Ovary (tissue), 10 donors: ENCODE measurements at regions of chr16 and their contacts with region 1.

Region 1: DNA sequence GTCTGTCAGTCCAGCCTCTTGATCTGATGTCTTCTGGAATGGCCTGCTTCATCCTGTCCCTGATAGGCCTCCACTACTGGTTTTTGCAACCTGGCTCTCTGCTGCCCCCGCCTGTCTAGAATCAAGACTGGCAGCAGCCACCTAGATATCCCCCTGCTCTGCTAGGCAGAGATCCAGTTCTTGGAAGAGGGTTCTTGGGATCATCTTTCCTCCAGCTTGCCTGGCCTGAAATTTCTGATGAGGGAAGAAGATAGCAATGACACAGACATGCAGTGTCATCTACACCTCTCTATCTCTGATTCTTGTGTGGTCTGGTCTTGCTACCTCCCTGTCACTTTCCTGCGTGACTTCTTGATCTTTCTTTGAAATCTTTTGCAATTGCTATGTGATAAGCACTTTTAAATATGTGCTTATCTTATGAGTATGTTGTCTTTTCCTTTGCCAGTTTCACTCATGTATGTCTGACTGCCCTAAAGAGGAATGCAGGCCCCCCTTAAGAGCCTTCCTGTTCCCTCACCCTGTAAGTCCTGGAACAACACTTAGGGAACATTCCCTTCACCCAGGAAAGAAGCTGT is 20.3 kb upstream of the NFATC3 start:
- DNase-seq: peak; percentile 61 to 74 (median 62)
- H3K4me3 ChIP-seq: no peak overlapping the region
- H3K27ac ChIP-seq: no peak overlapping the region
- H3K4me1 ChIP-seq: peaks cover 5% of the 10 kb centered on the region
- H3K27me3 ChIP-seq: no peaks in the 10 kb centered on the region
- CTCF ChIP-seq: peak in 2 of 3 donors; percentile 29 to 52
- EP300 ChIP-seq: no peak
- POLR2A ChIP-seq: no peak

Region 2: DNA sequence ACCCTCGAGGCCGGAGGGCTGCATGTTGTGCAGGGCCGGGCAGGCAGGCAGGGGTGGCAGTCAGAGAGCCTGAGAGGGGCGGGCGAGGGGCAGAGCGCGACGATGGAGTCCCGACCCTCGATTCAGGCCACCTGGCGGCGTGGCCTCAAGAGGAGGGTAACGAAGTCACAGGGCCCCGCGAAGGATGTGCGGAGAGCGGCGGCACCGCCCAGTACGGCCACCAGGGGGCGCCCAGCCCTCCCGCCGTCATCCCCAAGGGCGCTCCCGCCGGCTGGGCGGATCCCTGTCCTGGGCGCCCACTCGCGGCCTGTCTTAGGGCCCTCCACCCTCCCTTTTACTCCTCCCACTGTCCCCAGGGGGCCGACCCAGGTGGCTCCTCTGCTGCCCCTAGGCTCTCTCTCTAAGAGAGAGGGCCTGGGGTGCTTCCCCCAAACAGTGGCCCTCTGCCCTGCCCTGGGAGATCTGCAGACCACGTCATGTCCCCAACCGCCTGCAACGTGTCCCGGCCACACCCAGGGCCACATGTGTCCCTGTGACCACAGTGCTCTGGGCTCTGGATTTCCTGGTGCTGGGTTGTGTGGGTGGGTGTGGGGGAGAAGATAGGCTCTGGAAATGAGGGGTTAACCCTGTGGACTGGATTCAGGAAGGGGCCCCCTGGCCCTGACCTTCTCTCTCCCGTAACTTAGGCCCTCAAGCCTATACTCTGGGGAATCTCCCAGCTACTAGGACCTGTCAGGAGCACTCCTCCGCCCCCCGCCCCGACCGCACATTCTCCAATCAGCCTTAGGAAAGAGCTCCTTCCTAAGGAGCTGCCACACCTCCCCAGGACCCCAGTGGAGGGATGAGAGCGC is 71.5 kb before region 1 on chr16:
- intact Hi-C with region 1: loop called in 1 of 4 experiments (anchors 10 kb)
- DNase-seq: peak; percentile 75 to 87 (median 80)
- H3K4me3 ChIP-seq: no peak overlapping the region
- H3K27ac ChIP-seq: no peak overlapping the region
- H3K4me1 ChIP-seq: peaks cover 2% of the 10 kb centered on the region
- H3K27me3 ChIP-seq: no peaks in the 10 kb centered on the region
- CTCF ChIP-seq: peak; percentile 94 to 96 (median 95)
- EP300 ChIP-seq: no peak
- POLR2A ChIP-seq: no peak

Region 3: DNA sequence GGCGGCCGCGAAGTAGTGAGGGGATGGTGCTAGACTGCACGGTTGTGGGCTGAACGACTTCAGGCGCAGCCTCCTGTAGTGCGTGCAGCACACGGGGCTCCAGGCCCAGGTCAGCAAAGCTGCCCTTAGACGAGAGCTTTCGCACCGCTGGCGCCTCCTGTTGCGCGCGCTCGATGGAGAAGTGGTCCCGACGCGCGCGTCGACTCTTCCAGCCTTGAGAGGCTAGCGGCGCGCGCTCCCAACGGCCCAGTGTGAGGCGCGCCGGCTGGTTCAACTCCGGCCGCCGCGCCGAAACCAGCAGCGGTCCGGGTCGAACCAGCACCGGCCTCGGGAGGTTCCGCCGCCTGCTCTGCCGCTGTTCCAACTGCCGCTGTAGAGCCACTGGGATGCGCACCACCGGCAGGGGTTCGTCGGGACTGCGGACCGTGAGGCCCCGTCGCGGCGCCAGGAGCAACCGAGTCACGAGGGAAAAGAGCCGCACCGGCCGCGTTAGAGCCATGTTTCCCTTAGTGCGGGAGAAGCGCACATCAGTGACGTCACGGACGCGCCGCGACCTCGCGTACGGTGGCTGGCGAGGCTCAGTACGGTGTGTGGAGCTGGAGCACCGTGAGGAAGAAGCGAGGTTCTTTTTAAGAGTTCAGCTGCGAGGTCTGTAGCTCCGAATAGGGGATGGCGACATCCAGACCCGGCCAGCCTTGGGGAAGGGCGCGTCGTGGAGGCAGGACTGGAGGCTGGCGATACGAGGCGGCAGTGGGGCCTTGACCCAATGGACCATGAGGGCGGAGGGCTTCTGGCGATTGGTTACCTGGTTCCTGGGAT is 42.0 kb before region 1 on chr16 and contains the starts of genes DDX28 and DUS2:
- intact Hi-C with region 1: no loop called
- DNase-seq: peak; percentile 87 to 96 (median 92)
- H3K4me3 ChIP-seq: peak within 1 kb of the TSS; percentile 92
- H3K27ac ChIP-seq: peak within 1 kb of the TSS; percentile 74 to 77
- H3K4me1 ChIP-seq: peaks cover 9% of the 10 kb centered on the region
- H3K27me3 ChIP-seq: no peaks in the 10 kb centered on the region
- CTCF ChIP-seq: peak in 1 of 3 donors; percentile 37
- EP300 ChIP-seq: no peak
- POLR2A ChIP-seq: peak; percentile 70
- total RNA-seq, gene DDX28: 6.8 to 14.0 (median 9.7) TPM
- total RNA-seq, gene DUS2: 4.8 to 15.7 (median 8.5) TPM